Gastrocnemius medialis (tissue), 4 donors: ENCODE measurements at regions of chr18 and their contacts with region 1.

Region 1: GRCh38 chr18:11310476-11311086 is 161.2 kb upstream of the PIEZO2 start:
- DNase-seq: peak; percentile 21 to 64
- ATAC-seq: peak; percentile 75 to 89
- H3K4me3 ChIP-seq: no peak overlapping the region
- H3K27ac ChIP-seq: no peak overlapping the region
- H3K4me1 ChIP-seq: peaks cover 0 to 3% of the 10 kb centered on the region in 2 donors
- H3K27me3 ChIP-seq: no peaks in the 10 kb centered on the region
- CTCF ChIP-seq: peak; percentile 73 to 86 (median 77)
- POLR2A ChIP-seq: no peak

Region 2: DNA sequence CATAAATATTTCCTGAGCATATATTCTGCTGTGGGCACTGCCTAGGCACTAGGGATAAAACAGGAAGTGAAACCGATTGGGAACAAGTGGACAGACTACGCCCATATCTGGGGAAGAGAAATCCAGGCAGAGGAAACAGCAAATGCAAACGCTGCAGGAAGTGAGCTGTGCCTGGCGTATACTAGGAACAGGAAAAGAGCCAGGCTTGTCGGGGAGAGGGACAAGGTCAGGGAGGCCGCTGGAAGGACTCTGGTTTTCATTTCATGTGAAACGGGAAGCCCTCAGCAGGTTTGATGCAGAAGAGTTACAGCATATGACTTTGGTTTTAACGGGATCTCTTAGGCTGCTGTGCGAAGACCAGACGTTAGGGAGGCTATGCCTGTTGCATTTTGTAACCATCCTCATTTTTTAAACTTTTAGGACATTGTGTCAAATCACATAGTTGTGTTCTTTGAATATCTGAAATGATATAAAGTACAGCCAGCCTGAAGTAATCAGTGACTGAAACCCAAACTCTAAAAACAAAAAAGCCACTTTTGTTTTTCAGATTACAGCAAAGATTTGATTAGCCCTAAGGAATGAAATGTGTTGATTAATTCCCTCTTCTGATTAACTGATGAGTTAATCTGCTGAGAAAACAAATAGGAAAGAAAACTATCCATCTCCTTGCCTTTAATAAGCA is 51.0 kb before region 1 on chr18:
- in situ Hi-C with region 1: no loop called
- intact Hi-C with region 1: no loop called
- DNase-seq: peak; percentile 37 to 62
- ATAC-seq: peak; percentile 45 to 81
- H3K4me3 ChIP-seq: peak overlapping the region in 1 of 4 donors; percentile 11
- H3K27ac ChIP-seq: peak overlapping the region in 1 of 4 donors; percentile 47
- H3K4me1 ChIP-seq: peaks cover 0 to 6% of the 10 kb centered on the region in 2 donors
- H3K27me3 ChIP-seq: no peaks in the 10 kb centered on the region
- CTCF ChIP-seq: no peak
- POLR2A ChIP-seq: no peak

Region 3: GRCh38 chr18:11366410-11366809 is 55.8 kb after region 1 on chr18:
- in situ Hi-C with region 1: no loop called
- intact Hi-C with region 1: no loop called
- DNase-seq: peak; percentile 76 to 84
- ATAC-seq: peak; percentile 99 to 100
- H3K4me3 ChIP-seq: peak overlapping the region in 1 of 4 donors; percentile 27
- H3K27ac ChIP-seq: peak overlapping the region; percentile 91 to 95 (median 92)
- H3K4me1 ChIP-seq: peaks cover 11 to 25% of the 10 kb centered on the region in 2 donors
- H3K27me3 ChIP-seq: no peaks in the 10 kb centered on the region
- CTCF ChIP-seq: no peak
- POLR2A ChIP-seq: peak in 1 of 2 donors; percentile 45

Region 4: GRCh38 chr18:11387880-11388279 is 77.3 kb after region 1 on chr18:
- in situ Hi-C with region 1: loop called in 1 of 4 experiments (anchors 10 kb)
- intact Hi-C with region 1: loop called (anchors 1 kb)
- DNase-seq: peak; percentile 54 to 80
- ATAC-seq: peak; percentile 75 to 99
- H3K4me3 ChIP-seq: no peak overlapping the region
- H3K27ac ChIP-seq: no peak overlapping the region
- H3K4me1 ChIP-seq: no peaks in the 10 kb centered on the region
- H3K27me3 ChIP-seq: no peaks in the 10 kb centered on the region
- CTCF ChIP-seq: peak; percentile 44 to 87 (median 58)
- POLR2A ChIP-seq: no peak

Region 5: DNA sequence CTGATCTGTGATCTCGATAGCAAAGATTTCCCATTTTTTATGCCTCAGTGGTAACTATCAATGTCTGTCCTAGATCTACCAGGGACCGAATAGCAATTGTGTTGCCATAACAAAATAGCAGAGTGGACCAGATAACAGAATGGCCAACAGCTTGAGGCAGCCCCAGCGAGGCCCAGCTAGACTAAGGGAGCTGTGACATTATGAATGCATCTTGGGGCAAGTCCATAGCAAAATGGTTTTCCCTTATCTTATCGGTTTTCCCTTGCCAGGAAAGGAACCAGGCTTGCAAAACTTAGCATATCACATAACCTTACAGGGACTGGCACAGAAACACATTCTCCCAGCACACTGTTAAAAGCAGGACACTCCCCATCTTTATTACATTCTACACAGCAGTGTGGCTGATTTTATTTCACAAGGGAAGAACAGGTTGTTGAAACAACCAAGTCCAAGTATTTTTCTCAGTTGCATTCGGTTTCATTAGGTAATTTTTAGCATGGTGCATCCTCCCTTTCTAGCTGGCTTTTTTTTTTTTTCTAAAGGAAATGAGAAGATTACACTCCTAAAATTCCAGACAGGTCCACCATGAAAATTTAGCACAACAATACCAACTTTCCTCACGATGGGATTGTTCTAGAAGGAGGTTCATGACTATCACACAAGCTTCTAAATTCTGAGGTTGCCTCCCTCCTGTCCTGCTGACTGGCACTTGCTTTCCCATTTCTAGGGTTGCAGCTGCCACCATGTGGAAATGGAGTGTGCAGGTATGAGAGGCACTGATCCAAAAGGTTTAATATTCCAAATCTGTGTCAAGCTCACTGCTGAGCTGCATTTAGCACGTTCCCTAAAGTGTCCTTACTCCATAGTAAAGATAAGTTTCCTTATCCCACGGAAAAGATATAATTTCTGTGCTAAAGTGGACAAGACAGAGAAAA is 201.8 kb after region 1 on chr18:
- in situ Hi-C with region 1: loop called in 2 of 4 experiments (anchors 5 to 25 kb)
- intact Hi-C with region 1: loop called (anchors 2 kb)
- DNase-seq: peak; percentile 41 to 74
- ATAC-seq: peak; percentile 97 to 98
- H3K4me3 ChIP-seq: no peak overlapping the region
- H3K27ac ChIP-seq: peak overlapping the region; percentile 30 to 79 (median 70)
- H3K4me1 ChIP-seq: peaks cover 8 to 20% of the 10 kb centered on the region in 2 donors
- H3K27me3 ChIP-seq: no peaks in the 10 kb centered on the region
- CTCF ChIP-seq: peak in 3 of 5 experiments; percentile 9 to 39 (median 34)
- POLR2A ChIP-seq: no peak

Region 6: GRCh38 chr18:11518788-11519685 is 208.5 kb after region 1 on chr18:
- in situ Hi-C with region 1: loop called in 2 of 4 experiments (anchors 5 to 25 kb)
- intact Hi-C with region 1: no loop called
- DNase-seq: no peak
- ATAC-seq: peak in 1 of 2 donors; percentile 60
- H3K4me3 ChIP-seq: no peak overlapping the region
- H3K27ac ChIP-seq: no peak overlapping the region
- H3K4me1 ChIP-seq: no peaks in the 10 kb centered on the region
- H3K27me3 ChIP-seq: no peaks in the 10 kb centered on the region
- CTCF ChIP-seq: peak in 4 of 5 experiments; percentile 38 to 65 (median 39)
- POLR2A ChIP-seq: no peak

Region 7: GRCh38 chr18:11553098-11553940 is 242.7 kb after region 1 on chr18:
- in situ Hi-C with region 1: no loop called
- intact Hi-C with region 1: loop called (anchors 1 kb)
- DNase-seq: no peak
- ATAC-seq: peak; percentile 69 to 82
- H3K4me3 ChIP-seq: no peak overlapping the region
- H3K27ac ChIP-seq: no peak overlapping the region
- H3K4me1 ChIP-seq: no peaks in the 10 kb centered on the region
- H3K27me3 ChIP-seq: no peaks in the 10 kb centered on the region
- CTCF ChIP-seq: peak; percentile 75 to 87 (median 79)
- POLR2A ChIP-seq: no peak